Tibial artery (tissue), 4 donors: ENCODE measurements at regions of chr3 and their contacts with region 1.

Region 1: GRCh38 chr3:149969940-149970715 is 567 bp downstream of the PFN2 start:
- DNase-seq: peak; percentile 68 to 89
- H3K4me3 ChIP-seq: peak overlapping the region; percentile 93 to 94
- H3K27ac ChIP-seq: peak overlapping the region; percentile 97
- H3K4me1 ChIP-seq: peaks cover 0 to 48% (median 18%) of the 10 kb centered on the region in 4 donors
- H3K27me3 ChIP-seq: no peaks in the 10 kb centered on the region
- CTCF ChIP-seq: no peak

Region 2: GRCh38 chr3:150005243-150006112 is 35.4 kb after region 1 on chr3:
- intact Hi-C with region 1: no loop called
- DNase-seq: no peak
- H3K4me3 ChIP-seq: no peak overlapping the region
- H3K27ac ChIP-seq: no peak overlapping the region
- H3K4me1 ChIP-seq: no peaks in the 10 kb centered on the region
- H3K27me3 ChIP-seq: no peaks in the 10 kb centered on the region
- CTCF ChIP-seq: no peak

Region 3: GRCh38 chr3:150183678-150184425 is 213.7 kb after region 1 on chr3:
- intact Hi-C with region 1: loop called (anchors 2 kb)
- DNase-seq: peak; percentile 56 to 80
- H3K4me3 ChIP-seq: peak overlapping the region; percentile 35 to 41
- H3K27ac ChIP-seq: peak overlapping the region; percentile 10 to 28
- H3K4me1 ChIP-seq: peaks cover 0 to 13% (median 3%) of the 10 kb centered on the region in 4 donors
- H3K27me3 ChIP-seq: no peaks in the 10 kb centered on the region
- CTCF ChIP-seq: peak; percentile 58 to 68

Region 4: GRCh38 chr3:150194513-150194912 is 224.4 kb after region 1 on chr3:
- intact Hi-C with region 1: no loop called
- DNase-seq: no peak
- H3K4me3 ChIP-seq: no peak overlapping the region
- H3K27ac ChIP-seq: no peak overlapping the region
- H3K4me1 ChIP-seq: no peaks in the 10 kb centered on the region
- H3K27me3 ChIP-seq: no peaks in the 10 kb centered on the region
- CTCF ChIP-seq: no peak

Region 5: DNA sequence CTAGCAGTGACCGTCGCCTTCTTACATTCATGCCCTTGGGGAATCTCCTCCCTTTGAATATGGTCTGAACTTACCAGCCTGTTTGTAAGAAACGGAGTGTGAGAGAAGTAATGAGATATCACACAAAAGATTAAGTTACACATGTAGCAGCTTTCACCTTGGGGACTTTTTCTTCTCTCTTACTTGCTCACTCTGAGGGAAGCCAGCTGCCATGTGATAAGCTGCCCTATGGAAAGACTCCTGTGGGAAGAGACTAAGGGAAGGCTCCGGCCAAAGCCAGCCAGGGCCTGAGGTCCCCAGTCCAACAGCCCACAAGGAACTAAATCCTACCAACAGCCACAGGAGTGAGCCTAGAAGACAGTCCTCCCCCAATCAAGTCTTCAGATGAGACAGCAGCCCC is 247.6 kb after region 1 on chr3:
- intact Hi-C with region 1: loop called (anchors 2 kb)
- DNase-seq: no peak
- H3K4me3 ChIP-seq: no peak overlapping the region
- H3K27ac ChIP-seq: no peak overlapping the region
- H3K4me1 ChIP-seq: peaks cover 0 to 27% (median 12%) of the 10 kb centered on the region in 4 donors
- H3K27me3 ChIP-seq: no peaks in the 10 kb centered on the region
- CTCF ChIP-seq: no peak

Region 6: DNA sequence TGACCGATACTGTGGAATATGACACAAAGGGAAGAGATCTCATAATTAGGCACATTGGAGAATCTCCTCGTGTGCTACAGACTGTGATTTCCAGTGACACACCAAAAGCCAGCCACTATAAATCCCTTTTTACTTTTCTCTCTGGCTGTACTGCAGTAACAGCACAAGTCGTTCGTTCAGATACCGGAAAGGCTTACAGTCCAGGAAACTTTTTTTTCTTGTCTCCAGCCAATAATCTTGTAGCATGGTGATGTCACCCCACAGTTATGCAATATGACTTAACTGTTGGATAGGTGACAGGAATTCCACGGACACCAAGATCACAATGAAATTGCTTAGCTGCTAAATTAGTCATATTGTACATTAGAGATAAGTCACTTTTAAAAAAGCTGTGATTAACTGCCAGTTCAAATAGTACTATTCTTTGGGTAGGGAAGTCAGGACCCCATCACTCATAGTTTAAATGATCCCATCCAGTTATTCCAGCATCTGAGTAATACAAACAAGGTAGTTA is 401.7 kb after region 1 on chr3:
- intact Hi-C with region 1: loop called (anchors 5 kb)
- DNase-seq: peak in 1 of 2 donors; percentile 49
- H3K4me3 ChIP-seq: peak overlapping the region; percentile 25 to 27
- H3K27ac ChIP-seq: peak overlapping the region; percentile 52 to 75
- H3K4me1 ChIP-seq: peaks cover 0 to 35% (median 14%) of the 10 kb centered on the region in 4 donors
- H3K27me3 ChIP-seq: no peaks in the 10 kb centered on the region
- CTCF ChIP-seq: no peak